BJ (cell line): ENCODE measurements at regions of chr15 and their contacts with region 1.

Region 1: GRCh38 chr15:67501177-67501835 is 19.6 kb upstream of the C15orf61 start:
- DNase-seq: no peak
- H3K4me3 ChIP-seq: no peak overlapping the region
- H3K27me3 ChIP-seq: no peaks in the 10 kb centered on the region
- CTCF ChIP-seq: peak; percentile 49

Region 2: GRCh38 chr15:67833710-67834511 is 332.6 kb after region 1 on chr15:
- CTCF ChIA-PET with region 1: interaction called, 15 read pairs
- POLR2A ChIA-PET with region 1: no interaction called
- DNase-seq: no peak
- H3K4me3 ChIP-seq: no peak overlapping the region
- H3K27me3 ChIP-seq: peaks cover 64% of the 10 kb centered on the region
- CTCF ChIP-seq: peak; percentile 67